H1 (cell line): ENCODE measurements at regions of chr6 and their contacts with region 1.

Region 1: DNA sequence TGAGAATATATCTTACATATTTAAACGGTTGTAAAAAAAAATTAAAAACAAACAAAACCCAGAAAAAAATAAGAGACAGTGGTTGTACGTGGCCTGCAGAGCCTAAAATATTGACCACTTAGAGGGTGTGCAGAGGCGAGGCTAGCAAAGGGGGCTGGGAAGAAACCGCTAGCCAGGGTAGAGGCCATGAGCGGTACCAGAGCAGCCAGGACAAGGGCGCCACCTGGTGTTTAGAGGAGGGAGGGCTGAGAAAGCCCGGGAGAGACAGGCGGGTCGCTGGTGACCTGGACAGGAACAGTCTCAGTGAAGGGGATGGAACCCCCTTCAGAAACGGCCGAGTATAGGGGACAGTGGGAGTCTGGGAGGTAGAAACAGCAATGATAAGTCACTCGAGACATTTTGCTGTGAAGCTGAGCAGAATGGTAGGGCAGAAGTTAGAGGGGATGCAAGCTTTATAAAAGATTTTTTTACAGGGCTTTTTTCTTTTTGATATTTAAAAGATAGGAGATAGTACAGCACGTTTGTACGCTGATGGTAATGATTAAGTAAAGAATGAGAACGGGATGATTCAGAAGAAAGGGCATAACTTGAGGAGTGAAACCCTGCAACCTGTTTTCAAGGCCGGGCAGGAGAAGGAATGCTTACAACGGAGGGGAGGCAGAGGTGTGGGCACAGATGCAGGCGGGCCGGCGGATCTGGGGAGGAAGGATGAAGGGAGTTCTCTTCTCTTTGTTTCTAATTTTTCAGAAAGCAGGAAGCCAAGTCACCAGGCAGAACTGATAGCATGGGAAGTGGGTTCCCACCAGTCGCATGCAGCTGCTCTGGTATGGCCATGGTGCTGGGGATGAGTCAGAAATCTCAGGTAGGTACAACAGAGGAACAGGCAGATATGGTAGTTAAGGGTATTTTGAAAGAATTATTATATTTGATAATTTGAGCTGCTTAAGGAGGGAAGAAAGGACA is 76.2 kb downstream of the FAM229B start:
- DNase-seq: peak; percentile 50 to 94
- H3K4me3 ChIP-seq: no peak overlapping the region
- H3K27ac ChIP-seq: no peak overlapping the region
- H3K4me1 ChIP-seq: no peaks in the 10 kb centered on the region
- H3K27me3 ChIP-seq: no peaks in the 10 kb centered on the region
- CTCF ChIP-seq: peak; percentile 91 to 96 (median 93)
- EP300 ChIP-seq: no peak
- POLR2A ChIP-seq: no peak
- RAD21 ChIP-seq: peak; percentile 91 to 94

Region 2: GRCh38 chr6:112087136-112087911 is 76.3 kb before region 1 on chr6 and contains the starts of genes FAM229B and TUBE1:
- CTCF ChIA-PET with region 1: interaction called, 21 read pairs
- POLR2A ChIA-PET with region 1: no interaction called
- DNase-seq: peak; percentile 85 to 86
- H3K4me3 ChIP-seq: peak within 1 kb of the TSS; percentile 66 to 92 (median 79)
- H3K27ac ChIP-seq: peak within 1 kb of the TSS; percentile 50; the same call in 1 of the 2 replicates
- H3K4me1 ChIP-seq: no peaks in the 10 kb centered on the region
- H3K27me3 ChIP-seq: no peaks in the 10 kb centered on the region
- CTCF ChIP-seq: no peak; a peak in 1 of 4 replicates
- EP300 ChIP-seq: no peak
- POLR2A ChIP-seq: peak; percentile 75 to 85
- RAD21 ChIP-seq: no peak
- total RNA-seq, gene FAM229B: 10.0 and 10.5 TPM in 2 replicates
- total RNA-seq, gene TUBE1: 14.8 and 15.9 TPM in 2 replicates

Region 3: GRCh38 chr6:112122756-112123155 is 40.8 kb before region 1 on chr6:
- CTCF ChIA-PET with region 1: interaction called, 13 read pairs
- POLR2A ChIA-PET with region 1: no interaction called
- DNase-seq: no peak
- H3K4me3 ChIP-seq: no peak overlapping the region
- H3K27ac ChIP-seq: no peak overlapping the region
- H3K4me1 ChIP-seq: peaks cover 0 to 3% (median 0%) of the 10 kb centered on the region in 4 experiments; a peak in 1 of 7 replicates
- H3K27me3 ChIP-seq: no peaks in the 10 kb centered on the region
- CTCF ChIP-seq: no peak
- EP300 ChIP-seq: no peak
- POLR2A ChIP-seq: no peak
- RAD21 ChIP-seq: no peak